Right cardiac atrium (tissue), 5 donors: ENCODE measurements at regions of chr9 and their contacts with region 1.

Region 1: DNA sequence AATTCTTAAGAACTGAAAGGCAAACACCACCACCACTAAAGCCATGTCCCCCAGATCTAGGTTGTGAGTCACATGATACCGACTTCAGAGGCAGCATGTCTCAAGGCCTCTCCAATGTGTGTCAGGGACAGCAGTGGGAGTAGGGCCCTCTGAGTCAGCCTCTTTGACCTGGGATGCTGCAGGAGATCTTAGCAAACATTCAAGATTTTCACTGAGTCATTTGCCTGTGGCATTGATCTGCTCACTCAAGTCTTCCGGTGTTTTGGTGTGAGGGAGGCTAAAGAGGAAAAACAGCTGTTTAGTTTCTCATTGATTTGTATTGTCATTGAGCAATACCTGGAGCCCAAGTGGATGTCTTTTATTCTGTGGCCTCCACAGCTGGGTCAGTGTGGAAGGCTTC is 36.1 kb downstream of the TMC1 start:
- DNase-seq: peak in 1 of 3 donors; percentile 17
- ATAC-seq: no peak
- H3K4me3 ChIP-seq: no peak overlapping the region
- H3K27ac ChIP-seq: no peak overlapping the region
- H3K4me1 ChIP-seq: peaks cover 1% of the 10 kb centered on the region
- H3K27me3 ChIP-seq: no peaks in the 10 kb centered on the region

Region 2: DNA sequence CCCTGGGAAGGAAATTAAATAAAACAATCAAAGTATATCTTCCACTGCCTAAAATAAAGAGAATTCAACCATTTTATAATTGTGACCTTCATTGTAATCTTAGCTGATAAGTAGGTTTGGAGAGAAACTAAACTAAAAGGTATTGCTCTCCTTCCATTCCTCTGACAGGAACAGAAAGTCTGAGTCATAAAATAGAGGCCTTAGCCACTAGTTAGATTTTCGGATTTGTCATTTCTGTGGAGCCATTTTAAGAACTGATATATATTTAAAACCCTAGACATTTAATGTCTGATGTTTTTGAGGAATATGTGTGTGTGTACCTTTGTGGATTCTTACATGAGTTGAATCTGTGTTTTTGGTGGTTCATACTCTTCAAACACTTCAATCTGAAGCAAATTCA is 47.9 kb before region 1 on chr9:
- intact Hi-C with region 1: loop called in 1 of 4 experiments (anchors 10 kb)
- DNase-seq: no peak
- ATAC-seq: no peak
- H3K4me3 ChIP-seq: no peak overlapping the region
- H3K27ac ChIP-seq: no peak overlapping the region
- H3K4me1 ChIP-seq: no peaks in the 10 kb centered on the region
- H3K27me3 ChIP-seq: no peaks in the 10 kb centered on the region

Region 3: DNA sequence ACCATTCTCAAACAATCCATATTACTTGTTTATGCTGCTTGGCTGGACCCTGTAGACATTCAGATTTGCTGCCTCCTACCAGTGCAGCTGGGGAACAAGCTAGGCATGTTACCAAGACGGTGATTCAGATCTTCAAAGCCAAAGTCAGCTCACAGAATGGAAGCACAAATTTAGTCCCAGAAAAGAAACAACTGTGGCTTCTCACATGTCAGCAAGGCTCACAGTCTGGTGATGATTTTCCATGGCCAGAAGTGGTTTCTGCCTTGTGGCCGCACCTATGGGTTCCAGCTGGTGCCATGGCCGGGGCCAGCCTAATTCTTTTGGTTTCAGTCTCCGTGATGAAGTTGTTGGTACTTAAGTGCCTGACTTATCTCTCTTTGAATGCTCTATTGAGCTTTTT is 146.0 kb after region 1 on chr9:
- intact Hi-C with region 1: no loop called
- DNase-seq: no peak
- ATAC-seq: no peak
- H3K4me3 ChIP-seq: no peak overlapping the region
- H3K27ac ChIP-seq: no peak overlapping the region
- H3K4me1 ChIP-seq: no peaks in the 10 kb centered on the region
- H3K27me3 ChIP-seq: no peaks in the 10 kb centered on the region

Region 4: GRCh38 chr9:73050065-73050816 is 492.7 kb after region 1 on chr9:
- intact Hi-C with region 1: no loop called
- DNase-seq: no peak
- ATAC-seq: no peak
- H3K4me3 ChIP-seq: no peak overlapping the region
- H3K27ac ChIP-seq: no peak overlapping the region
- H3K4me1 ChIP-seq: no peaks in the 10 kb centered on the region
- H3K27me3 ChIP-seq: no peaks in the 10 kb centered on the region